Calu3 (cell line): ENCODE measurements at regions of chr17 and their contacts with region 1.

Region 1: GRCh38 chr17:40104594-40105486 is 4.5 kb upstream of the NR1D1 start:
- DNase-seq: peak; percentile 88
- H3K4me3 Mint-ChIP-seq: no peak overlapping the region
- H3K27ac Mint-ChIP-seq: peak overlapping the region; percentile 0
- H3K4me1 Mint-ChIP-seq: peaks cover 92% of the 10 kb centered on the region
- H3K27me3 Mint-ChIP-seq: no peaks in the 10 kb centered on the region
- CTCF ChIP-seq: no peak

Region 2: GRCh38 chr17:39547713-39548478 is 556.9 kb before region 1 on chr17:
- CTCF ChIA-PET with region 1: no interaction called
- intact Hi-C with region 1: no loop called
- DNase-seq: peak; percentile 96
- H3K4me3 Mint-ChIP-seq: no peak overlapping the region
- H3K27ac Mint-ChIP-seq: no peak overlapping the region
- H3K4me1 Mint-ChIP-seq: peaks cover 12% of the 10 kb centered on the region
- H3K27me3 Mint-ChIP-seq: no peaks in the 10 kb centered on the region
- CTCF ChIP-seq: peak; percentile 100

Region 3: GRCh38 chr17:39699818-39700147 is 405.1 kb before region 1 on chr17 and contains the start of gene ERBB2:
- CTCF ChIA-PET with region 1: interaction called, 10 read pairs
- intact Hi-C with region 1: no loop called
- DNase-seq: peak; percentile 100
- H3K4me3 Mint-ChIP-seq: peak within 1 kb of the TSS; percentile 71
- H3K27ac Mint-ChIP-seq: peak within 1 kb of the TSS; percentile 67
- H3K4me1 Mint-ChIP-seq: peaks cover 68% of the 10 kb centered on the region
- H3K27me3 Mint-ChIP-seq: no peaks in the 10 kb centered on the region
- CTCF ChIP-seq: no peak
- total RNA-seq, gene ERBB2: 4,829 and 4,830 TPM in 2 replicates

Region 4: DNA sequence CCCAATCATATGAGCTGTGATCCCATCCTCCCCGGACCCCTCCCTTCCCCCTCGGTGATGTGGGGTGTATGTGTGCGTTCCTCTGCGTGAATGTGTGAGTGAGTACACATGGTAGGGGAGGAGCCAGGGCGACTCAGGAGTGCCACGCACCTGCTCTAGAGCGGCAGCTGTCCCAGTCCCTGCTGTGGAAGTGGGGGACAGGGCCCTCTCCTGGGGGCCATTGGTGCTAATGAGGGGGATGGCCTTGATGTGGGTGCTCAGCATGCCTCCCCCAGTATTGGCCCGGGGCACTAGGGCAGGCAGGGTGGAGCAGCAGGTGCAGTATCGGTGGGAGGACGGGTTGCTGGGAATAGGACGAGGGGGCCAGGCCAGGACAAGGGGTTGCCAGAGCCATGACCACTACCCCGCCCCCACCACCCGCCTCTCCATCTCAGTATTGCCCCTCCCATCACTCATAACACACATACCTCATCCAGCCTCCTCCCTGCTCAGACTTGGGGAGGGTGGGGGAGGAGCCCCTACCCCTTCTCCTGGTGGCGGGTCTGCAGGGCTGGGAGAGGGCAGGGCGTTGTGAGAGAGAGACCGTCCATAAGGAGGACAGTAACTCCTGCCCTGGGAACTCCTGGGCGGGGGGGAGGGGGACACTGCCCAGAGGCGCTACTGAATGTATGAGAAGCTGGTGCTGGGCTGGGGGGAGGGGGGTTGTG is 13.0 kb before region 1 on chr17:
- CTCF ChIA-PET with region 1: interaction called, 1,006 read pairs
- intact Hi-C with region 1: no loop called
- DNase-seq: no peak
- H3K4me3 Mint-ChIP-seq: no peak overlapping the region
- H3K27ac Mint-ChIP-seq: no peak overlapping the region
- H3K4me1 Mint-ChIP-seq: peaks cover 3% of the 10 kb centered on the region
- H3K27me3 Mint-ChIP-seq: no peaks in the 10 kb centered on the region
- CTCF ChIP-seq: no peak

Region 5: DNA sequence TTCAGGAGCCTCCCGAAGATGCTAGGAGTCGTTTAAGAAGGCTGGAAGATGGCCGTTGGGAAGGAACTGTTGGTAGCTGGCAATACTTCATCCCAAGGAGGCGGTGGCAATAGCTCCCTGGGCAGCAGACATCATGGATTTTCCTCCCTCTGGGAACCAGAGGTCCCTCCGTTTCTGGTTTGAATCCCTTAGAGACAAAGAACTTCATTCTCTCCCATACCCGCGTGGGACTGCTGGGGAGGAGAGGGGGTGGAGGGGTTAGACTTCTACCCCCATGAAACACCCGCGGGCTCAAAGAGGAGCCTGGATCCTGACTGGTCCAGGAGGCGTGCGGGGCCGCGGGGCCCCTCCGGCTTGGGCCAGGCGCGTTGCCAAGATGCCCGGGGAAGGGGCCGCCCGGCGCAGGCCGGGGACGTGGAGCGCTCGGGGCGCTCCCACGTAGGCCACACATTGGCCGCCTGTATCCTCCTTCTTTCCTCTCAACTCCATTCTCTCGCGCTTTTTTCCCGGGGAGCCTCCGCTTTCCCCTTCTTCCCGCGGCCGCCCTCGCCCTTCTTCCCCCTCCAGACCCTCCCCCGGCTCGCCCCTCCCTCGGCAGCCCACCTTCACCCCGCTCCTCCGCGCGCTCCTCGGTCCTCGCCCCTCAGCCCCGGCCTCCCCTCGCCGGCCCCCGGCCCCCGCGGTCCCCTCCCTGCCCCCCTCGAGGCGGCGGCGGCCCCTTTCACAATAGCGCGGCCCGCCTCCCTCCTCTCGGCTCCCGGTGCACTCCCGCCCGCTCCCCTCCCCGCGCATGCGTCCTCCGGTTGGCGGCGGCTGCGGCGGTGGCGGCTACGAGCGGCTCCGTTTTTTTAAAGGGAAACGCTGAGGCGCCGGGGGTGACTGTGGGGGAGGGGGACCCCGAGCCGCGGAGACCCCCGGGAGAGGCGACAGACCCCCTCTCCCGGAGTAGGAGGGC is 16.6 kb after region 1 on chr17 and contains the start of gene MSL1:
- CTCF ChIA-PET with region 1: interaction called, 674 read pairs
- intact Hi-C with region 1: no loop called
- DNase-seq: peak; percentile 100
- H3K4me3 Mint-ChIP-seq: peak within 1 kb of the TSS; percentile 86
- H3K27ac Mint-ChIP-seq: peak within 1 kb of the TSS; percentile 53
- H3K4me1 Mint-ChIP-seq: peaks cover 48% of the 10 kb centered on the region
- H3K27me3 Mint-ChIP-seq: no peaks in the 10 kb centered on the region
- CTCF ChIP-seq: no peak
- total RNA-seq, gene MSL1: 505 and 524 TPM in 2 replicates

Region 6: DNA sequence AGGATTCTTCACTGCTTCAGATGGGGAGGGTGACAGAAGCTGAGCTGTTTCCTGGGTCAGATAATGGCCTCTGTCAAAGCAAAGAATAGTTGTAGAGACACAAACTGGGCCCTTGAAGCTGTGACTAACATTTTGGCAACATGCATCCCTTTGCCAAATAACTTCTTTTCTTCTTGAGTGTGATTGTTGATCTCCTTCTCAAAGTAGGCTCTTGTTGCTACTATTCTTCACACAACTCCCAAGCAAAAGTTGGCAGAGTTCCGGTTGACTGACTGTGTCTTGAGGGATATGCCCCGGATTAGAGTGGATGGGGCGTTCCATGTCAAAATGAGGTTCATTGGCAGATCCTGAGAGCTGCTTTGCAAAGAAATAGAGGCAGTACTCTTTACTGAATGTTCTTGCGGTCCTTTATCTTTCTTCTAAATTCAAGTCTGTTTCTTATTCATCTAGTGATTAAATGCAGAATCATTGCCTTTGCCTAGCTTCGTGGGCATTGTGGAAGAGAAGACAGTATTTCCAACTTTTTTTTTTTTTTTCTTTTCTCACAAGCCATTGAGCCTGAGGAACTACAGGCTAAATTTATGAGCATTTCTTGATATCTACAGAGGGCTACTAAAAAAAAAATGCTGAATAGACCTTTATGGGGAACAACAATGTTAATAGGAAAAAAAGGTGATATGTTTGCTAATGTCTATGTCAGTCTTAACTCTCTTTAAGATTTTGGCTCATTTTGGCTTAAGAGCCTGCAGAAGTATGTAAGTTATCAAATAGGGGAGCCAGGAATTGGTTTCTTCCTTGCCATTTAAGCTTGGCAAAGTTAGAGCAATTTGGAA is 120.1 kb after region 1 on chr17:
- CTCF ChIA-PET with region 1: no interaction called
- intact Hi-C with region 1: no loop called
- DNase-seq: no peak
- H3K4me3 Mint-ChIP-seq: no peak overlapping the region
- H3K27ac Mint-ChIP-seq: no peak overlapping the region
- H3K4me1 Mint-ChIP-seq: peaks cover 24% of the 10 kb centered on the region
- H3K27me3 Mint-ChIP-seq: no peaks in the 10 kb centered on the region
- CTCF ChIP-seq: no peak